PC-9 (cell line): ENCODE measurements at regions of chr1 and their contacts with region 1.

Region 1: DNA sequence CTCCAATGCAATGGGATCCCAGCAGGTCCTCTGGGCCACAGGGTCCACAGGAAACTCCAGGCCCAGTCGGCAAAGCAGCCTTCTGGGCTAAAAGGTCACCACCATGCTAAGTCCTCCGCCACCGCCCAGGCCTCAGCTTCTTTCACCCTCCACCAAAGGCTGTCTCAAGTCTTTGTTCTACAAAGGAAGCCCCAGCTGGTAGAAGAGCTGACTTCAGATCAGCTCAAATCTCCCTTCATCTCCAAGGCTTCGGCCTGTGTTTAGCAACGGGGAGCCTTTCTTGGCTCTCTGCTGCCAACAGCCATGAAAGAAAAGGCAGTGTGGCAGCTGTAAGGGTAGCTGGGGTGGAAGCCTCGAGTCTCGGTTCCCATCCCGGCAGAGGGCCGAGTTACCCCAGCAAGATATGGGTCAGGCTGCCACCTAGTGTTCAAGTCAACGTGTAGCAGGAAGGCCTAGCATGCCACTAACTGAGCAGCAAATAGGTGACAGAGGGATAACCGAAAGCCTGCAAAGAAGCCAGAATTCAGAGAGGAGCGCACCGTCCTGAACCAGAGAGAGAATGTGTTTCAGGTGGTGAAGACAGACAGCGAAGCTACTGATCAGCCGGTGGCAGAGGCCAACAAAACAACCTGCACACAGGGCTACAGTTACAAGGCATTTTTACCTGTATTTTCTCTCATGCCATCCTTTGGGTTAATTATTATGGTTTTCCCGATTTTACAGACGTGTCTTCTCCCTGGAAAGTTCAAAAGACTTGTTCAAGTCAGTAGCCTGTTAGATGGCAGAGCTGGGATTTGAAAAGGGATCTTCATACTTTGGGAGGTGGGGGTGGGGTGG is 26.8 kb upstream of the CRNN start:
- DNase-seq: peak in 1 of 2 experiments; percentile 55
- H3K4me3 ChIP-seq: no peak overlapping the region
- H3K27ac ChIP-seq: no peak overlapping the region
- H3K4me1 ChIP-seq: no peaks in the 10 kb centered on the region
- H3K27me3 ChIP-seq: peaks cover 30% of the 10 kb centered on the region
- CTCF ChIP-seq: peak; percentile 87

Region 2: DNA sequence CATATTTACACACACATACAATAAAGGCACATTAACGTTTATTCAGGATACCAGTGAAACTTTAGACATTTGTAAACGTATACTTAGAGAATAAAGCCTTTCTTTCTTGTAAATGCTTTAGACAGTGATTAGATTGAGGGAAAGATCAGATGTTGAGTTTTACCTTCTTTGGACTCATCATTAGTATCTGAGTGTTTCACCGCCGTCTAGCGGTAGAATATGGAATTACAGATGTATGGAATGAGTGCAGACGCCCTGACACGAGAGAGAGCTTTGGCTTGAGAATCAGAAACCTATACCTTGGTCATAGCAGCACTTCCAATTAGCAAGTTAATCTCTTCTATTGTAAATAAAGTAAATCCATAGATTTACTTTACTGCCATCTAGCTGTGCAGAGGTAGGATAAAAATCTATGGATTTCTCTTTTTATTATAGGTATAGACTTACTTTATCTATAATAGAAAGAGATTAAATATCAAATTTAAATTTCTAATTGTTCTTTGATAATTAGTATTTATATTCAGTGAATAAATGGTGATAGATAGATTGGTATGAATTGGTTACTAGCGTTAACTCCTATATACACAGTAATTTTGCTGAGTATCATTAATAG is 93.6 kb before region 1 on chr1:
- CTCF ChIA-PET with region 1: no interaction called
- POLR2A ChIA-PET with region 1: interaction called, 14 read pairs
- intact Hi-C with region 1: loop called (anchors 5 kb)
- DNase-seq: peak; percentile 33 to 46
- H3K4me3 ChIP-seq: no peak overlapping the region
- H3K27ac ChIP-seq: no peak overlapping the region
- H3K4me1 ChIP-seq: no peaks in the 10 kb centered on the region
- H3K27me3 ChIP-seq: no peaks in the 10 kb centered on the region
- CTCF ChIP-seq: peak; percentile 92